ENCODE measurements at regions of chr3 and their contacts with region 1.

Region 1: GRCh38 chr3:90015688-90016356 is 908.4 kb downstream of the EPHA3 start:
- DNase-seq: peak; percentile 2
- H3K4me3 Mint-ChIP-seq: no peak overlapping the region
- H3K27ac Mint-ChIP-seq: peak overlapping the region; percentile 52
- H3K4me1 Mint-ChIP-seq: peaks cover 18% of the 10 kb centered on the region
- H3K27me3 Mint-ChIP-seq: no peaks in the 10 kb centered on the region
- CTCF ChIP-seq: no peak

Region 2: GRCh38 chr3:90035643-90036042 is 19.8 kb after region 1 on chr3:
- CTCF ChIA-PET with region 1: interaction called, 10 read pairs
- intact Hi-C with region 1: no loop called
- DNase-seq: no peak
- H3K4me3 Mint-ChIP-seq: no peak overlapping the region
- H3K27ac Mint-ChIP-seq: no peak overlapping the region
- H3K4me1 Mint-ChIP-seq: no peaks in the 10 kb centered on the region
- H3K27me3 Mint-ChIP-seq: no peaks in the 10 kb centered on the region
- CTCF ChIP-seq: no peak